Cardiac septum (tissue), 1 donor: ENCODE measurements at regions of chr5 and their contacts with region 1.

Region 1: DNA sequence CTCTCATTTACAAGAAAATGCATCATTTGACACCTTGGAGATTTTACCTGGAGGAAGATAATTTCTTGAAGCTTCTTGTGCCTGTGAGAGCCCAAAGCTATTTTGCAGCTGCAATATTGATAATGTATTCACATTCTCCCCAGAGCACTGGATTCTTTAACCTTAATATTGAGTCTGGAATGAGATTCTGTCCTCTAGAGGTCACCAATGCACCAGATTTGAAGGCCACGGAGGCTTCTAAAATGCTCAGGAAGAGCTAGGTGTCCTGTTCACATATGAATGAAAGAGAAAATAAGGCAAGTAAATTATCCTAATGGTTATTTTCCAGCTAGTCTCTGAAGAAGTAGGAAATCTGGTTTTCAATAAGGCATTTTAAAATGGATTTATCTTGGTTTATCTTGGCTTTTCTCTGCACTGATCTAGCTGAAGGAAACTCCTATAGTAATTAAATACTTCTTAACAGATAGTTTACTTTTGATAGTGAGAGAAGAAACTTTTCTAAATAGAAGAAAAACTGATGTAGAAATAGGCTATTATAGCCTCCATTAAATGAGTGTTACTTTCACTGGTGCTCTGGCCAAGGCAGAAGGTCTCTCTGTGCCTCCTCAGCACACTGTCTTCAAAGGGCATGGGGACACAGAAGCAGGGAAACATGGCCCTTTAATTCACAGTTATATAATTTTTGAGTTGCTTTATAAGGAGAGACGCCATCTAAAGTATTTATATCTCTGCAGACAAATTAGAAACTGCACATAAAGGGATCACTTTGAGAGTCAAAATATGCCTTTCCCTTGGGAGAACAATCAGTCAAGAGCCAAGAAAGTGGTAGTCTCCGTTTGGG is 297.0 kb upstream of the ACTBL2 start:
- DNase-seq: no peak

Region 2: GRCh38 chr5:57298295-57298984 is 481.2 kb before region 1 on chr5:
- intact Hi-C with region 1: loop called (anchors 5 kb)
- DNase-seq: peak; percentile 82

Region 3: DNA sequence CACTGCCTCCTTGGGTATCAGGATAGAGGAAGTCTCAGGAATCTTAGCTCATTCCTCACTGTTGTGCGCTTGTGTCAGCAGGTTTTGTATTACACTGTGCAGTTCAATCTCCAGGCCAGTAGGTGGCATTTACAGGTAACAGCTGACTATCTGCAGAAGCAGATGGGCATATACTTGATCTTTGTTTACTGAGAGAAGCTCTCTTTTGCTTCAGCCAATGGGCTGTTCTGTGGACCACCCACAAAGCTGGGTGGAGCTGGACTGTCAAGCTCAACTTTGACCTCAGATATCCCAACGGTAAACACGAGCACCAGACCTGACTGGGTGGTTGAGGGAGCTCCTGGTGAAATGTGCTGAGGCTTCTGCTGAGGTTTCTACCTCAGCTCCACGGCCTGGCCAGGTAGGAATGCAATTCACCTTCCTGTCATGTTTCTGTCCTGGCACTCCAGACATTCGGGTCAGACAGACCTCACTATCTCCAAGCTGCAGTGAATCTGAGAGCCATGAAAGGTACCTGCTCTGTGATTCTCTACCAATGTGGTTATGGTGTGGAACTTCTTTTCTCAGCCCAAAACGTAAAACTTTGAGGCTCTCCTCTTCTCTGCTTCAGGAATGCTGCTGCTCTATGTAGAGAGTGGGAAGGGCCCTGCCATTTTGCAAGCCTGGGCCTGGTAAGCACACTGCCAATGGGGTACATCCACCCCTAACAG is 129.1 kb before region 1 on chr5:
- intact Hi-C with region 1: loop called (anchors 5 kb)
- DNase-seq: no peak

Region 4: DNA sequence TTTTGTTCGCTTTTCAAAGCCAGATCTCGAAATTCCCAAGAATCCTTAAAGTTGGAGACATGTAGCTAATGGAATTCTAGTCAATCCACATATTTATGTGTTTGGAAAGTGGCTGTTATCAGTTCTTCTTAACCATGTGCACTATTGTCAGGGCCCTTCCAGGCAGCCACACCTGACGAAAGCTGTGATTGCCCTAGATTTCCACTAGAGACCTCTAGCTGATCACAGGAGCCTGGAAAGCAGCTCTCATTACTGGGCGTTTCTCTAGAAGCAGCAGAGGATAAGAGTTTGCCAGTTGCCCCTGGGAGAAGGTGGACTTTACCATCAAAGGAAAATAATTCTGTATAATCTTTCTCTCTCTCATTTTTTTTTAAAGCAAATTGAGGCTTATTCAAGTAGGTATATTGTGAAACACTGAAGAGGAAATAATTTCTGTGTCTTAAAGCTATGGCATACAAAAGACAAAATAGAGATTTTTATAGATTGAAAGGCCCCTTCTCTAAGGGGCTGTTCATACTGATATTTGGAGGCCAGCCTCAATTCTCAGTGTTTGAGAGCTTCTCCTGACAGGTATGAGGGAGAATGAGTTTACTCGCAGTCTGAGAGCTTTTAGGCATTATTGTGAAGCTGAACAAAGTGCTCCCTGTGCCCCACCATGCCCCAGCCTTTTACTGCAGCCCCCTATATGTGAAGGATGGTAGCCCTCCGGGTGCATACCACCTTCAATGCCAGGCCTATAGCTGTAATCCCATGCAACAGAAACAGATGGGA is 108.4 kb after region 1 on chr5:
- intact Hi-C with region 1: loop called (anchors 2 kb)
- DNase-seq: no peak

Region 5: DNA sequence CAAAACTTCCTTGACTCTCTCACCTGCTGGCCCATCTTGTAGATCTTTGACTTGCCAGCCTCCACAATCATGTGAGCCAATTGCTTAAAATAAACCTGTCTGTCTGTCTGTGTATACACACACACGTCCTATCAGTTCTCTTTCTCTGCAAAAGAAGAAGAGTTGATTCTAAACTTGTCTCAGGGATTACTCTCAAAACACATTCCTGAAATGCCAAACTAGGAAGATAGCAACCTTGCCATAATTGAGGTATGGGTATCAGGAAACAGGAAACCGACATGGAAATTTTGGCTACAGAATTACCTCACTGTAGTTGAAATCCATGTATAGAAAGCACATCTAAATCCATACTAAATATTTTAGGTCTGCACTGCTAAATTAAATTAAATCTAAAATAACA is 196.9 kb after region 1 on chr5:
- intact Hi-C with region 1: no loop called
- DNase-seq: no peak

Region 6: GRCh38 chr5:58071566-58071965 is 292.0 kb after region 1 on chr5:
- intact Hi-C with region 1: loop called (anchors 5 kb)
- DNase-seq: peak; percentile 88